ENCODE measurements at regions of chr19 and their contacts with region 1.

Region 1: GRCh38 chr19:54630782-54631181 is 498 bp downstream of the LILRB1 start:
- DNase-seq: no peak
- ATAC-seq: peak in 2 of 4 donors; percentile 25 to 31
- H3K4me3 ChIP-seq: peak overlapping the region in 5 of 12 donors; percentile 15 to 57 (median 22)
- H3K27ac ChIP-seq: peak overlapping the region in 1 of 12 donors; percentile 81
- H3K4me1 ChIP-seq: peaks cover 0 to 7% (median 0%) of the 10 kb centered on the region in 12 donors
- H3K27me3 ChIP-seq: peaks cover 0 to 36% (median 6%) of the 10 kb centered on the region in 9 donors
- CTCF ChIP-seq: no peak
- POLR2A ChIP-seq: no peak

Region 2: GRCh38 chr19:54281007-54281728 is 349.6 kb before region 1 on chr19 and contains the start of gene LILRB2:
- intact Hi-C with region 1: loop called in 1 of 10 experiments (anchors 5 kb)
- DNase-seq: no peak
- ATAC-seq: peak; percentile 32 to 47 (median 34)
- H3K4me3 ChIP-seq: peak within 1 kb of the TSS in 8 of 12 donors; percentile 11 to 59 (median 24)
- H3K27ac ChIP-seq: peak within 1 kb of the TSS in 5 of 12 donors; percentile 15 to 91 (median 43)
- H3K4me1 ChIP-seq: peaks cover 0 to 13% (median 0%) of the 10 kb centered on the region in 12 donors
- H3K27me3 ChIP-seq: peaks cover 0 to 54% (median 3%) of the 10 kb centered on the region in 9 donors
- CTCF ChIP-seq: no peak
- POLR2A ChIP-seq: no peak
- total RNA-seq, gene LILRB2: 0.83 to 43.6 (median 1.7) TPM

Region 3: GRCh38 chr19:54297760-54298305 is 332.9 kb before region 1 on chr19:
- intact Hi-C with region 1: loop called in 1 of 10 experiments (anchors 10 kb)
- DNase-seq: no peak
- ATAC-seq: no peak
- H3K4me3 ChIP-seq: no peak overlapping the region
- H3K27ac ChIP-seq: no peak overlapping the region
- H3K4me1 ChIP-seq: peaks cover 0 to 20% (median 0%) of the 10 kb centered on the region in 12 donors
- H3K27me3 ChIP-seq: peaks cover 0 to 26% (median 0%) of the 10 kb centered on the region in 9 donors
- CTCF ChIP-seq: no peak
- POLR2A ChIP-seq: no peak